Activated T-helper 2 cell treated with anti-CD3 and anti-CD28 coated beads, Interferon-gamma antibody, Interleukin-2, Interleukin-4, amounts not matched to agents 10 μg/mL and 5 μg/mL and 100 μg/mL, durations not matched to agents 14 hours and 24 hours and 36 hours (primary cell): ENCODE measurements at regions of chr6 and their contacts with region 1.

Region 1: GRCh38 chr6:134564705-134565104 is 246.8 kb upstream of the SGK1 start:
- DNase-seq: no peak
- H3K4me3 Mint-ChIP-seq: no peak overlapping the region
- H3K27ac Mint-ChIP-seq: no peak overlapping the region
- H3K4me1 Mint-ChIP-seq: peaks cover 16% of the 10 kb centered on the region
- H3K27me3 Mint-ChIP-seq: no peaks in the 10 kb centered on the region

Region 2: DNA sequence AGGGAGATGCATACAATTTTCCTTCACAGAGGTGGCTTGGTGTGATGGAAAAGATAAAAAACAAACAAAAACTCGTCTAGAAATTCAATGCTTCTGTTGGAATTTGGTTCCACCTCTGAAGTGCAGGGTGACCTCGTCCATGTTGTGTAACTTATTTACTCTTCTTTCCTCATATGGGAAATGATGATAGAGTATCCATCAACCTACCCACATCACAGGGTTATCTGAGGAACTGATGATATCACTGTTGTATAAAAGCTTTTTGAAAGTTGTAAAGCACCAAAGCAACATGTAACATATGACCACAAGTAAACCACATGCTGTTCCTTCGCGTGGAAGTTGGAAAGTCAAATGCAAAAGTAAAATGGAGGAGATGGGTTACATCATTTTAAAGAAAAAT is 34.8 kb before region 1 on chr6:
- intact Hi-C with region 1: loop called (anchors 5 kb)
- DNase-seq: no peak
- H3K4me3 Mint-ChIP-seq: no peak overlapping the region
- H3K27ac Mint-ChIP-seq: peak overlapping the region; percentile 11
- H3K4me1 Mint-ChIP-seq: peaks cover 53% of the 10 kb centered on the region
- H3K27me3 Mint-ChIP-seq: no peaks in the 10 kb centered on the region

Region 3: GRCh38 chr6:134787261-134787877 is 222.7 kb after region 1 on chr6:
- intact Hi-C with region 1: no loop called
- DNase-seq: no peak
- H3K4me3 Mint-ChIP-seq: no peak overlapping the region
- H3K27ac Mint-ChIP-seq: no peak overlapping the region
- H3K4me1 Mint-ChIP-seq: no peaks in the 10 kb centered on the region
- H3K27me3 Mint-ChIP-seq: peaks cover 11% of the 10 kb centered on the region